Panc1 (cell line): ENCODE measurements at regions of chr11 and their contacts with region 1.

Region 1: GRCh38 chr11:69296890-69297786 is 3.2 kb downstream of the MYEOV start:
- DNase-seq: peak; percentile 96
- ATAC-seq: peak; percentile 48
- H3K4me3 ChIP-seq: peak overlapping the region; percentile 73 to 94
- H3K27ac ChIP-seq: peak overlapping the region; percentile 100
- H3K4me1 ChIP-seq: peaks cover 73% of the 10 kb centered on the region
- H3K27me3 ChIP-seq: no peaks in the 10 kb centered on the region
- CTCF ChIP-seq: no peak

Region 2: GRCh38 chr11:69101115-69101791 is 195.9 kb before region 1 on chr11:
- CTCF ChIA-PET with region 1: interaction called, 5 read pairs
- POLR2A ChIA-PET with region 1: interaction called, 3 read pairs
- in situ Hi-C with region 1: no loop called
- intact Hi-C with region 1: loop called (anchors 5 kb)
- DNase-seq: peak; percentile 67
- ATAC-seq: peak; percentile 85
- H3K4me3 ChIP-seq: no peak overlapping the region
- H3K27ac ChIP-seq: no peak overlapping the region
- H3K4me1 ChIP-seq: peaks cover 35% of the 10 kb centered on the region
- H3K27me3 ChIP-seq: no peaks in the 10 kb centered on the region
- CTCF ChIP-seq: peak; percentile 100

Region 3: DNA sequence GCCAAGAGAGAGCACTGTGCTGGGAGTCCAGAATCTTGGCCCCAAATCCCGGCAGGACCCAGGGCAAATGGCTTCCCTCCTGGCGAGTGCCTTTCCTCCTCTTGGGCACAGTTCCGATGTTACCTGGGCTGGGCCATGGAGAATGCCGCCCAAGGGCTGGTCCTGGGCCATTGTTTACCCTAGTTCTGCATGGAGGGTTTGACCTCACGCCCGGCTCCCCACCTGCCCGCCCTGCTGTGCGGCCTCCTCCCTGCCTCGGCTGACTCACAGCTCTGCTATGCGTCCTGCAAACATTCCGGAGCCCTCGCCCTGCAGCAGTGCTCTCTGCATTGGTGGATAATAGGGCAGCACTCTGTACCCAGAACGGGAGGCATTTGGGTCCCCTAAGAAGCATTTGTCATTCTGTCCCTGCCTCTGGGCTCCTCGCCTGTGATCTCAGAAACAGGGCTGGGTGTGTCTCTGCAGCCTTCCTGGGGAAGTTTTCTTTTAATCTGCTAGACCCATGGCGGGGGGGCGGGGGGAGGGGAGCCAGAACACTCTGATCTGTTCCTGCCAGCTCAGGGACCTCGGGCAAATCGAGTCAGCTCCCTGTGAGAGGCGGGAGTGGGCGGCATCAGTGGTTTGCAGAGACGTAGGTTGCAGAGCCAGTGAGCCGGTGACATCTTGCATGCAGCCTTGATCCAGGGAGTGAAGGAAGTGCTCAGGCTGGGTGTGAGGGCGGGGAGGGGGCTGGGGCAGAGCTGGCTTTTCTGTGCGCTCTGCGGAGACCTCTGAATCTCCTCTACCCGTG is 174.3 kb before region 1 on chr11:
- CTCF ChIA-PET with region 1: no interaction called
- POLR2A ChIA-PET with region 1: interaction called, 5 read pairs
- in situ Hi-C with region 1: no loop called
- intact Hi-C with region 1: loop called (anchors 5 kb)
- DNase-seq: peak; percentile 64
- ATAC-seq: peak; percentile 95
- H3K4me3 ChIP-seq: peak overlapping the region; percentile 9 to 44; a peak in 3 of 4 replicates
- H3K27ac ChIP-seq: peak overlapping the region; percentile 94
- H3K4me1 ChIP-seq: peaks cover 61% of the 10 kb centered on the region
- H3K27me3 ChIP-seq: no peaks in the 10 kb centered on the region
- CTCF ChIP-seq: no peak

Region 4: GRCh38 chr11:69240332-69241074 is 56.6 kb before region 1 on chr11:
- CTCF ChIA-PET with region 1: no interaction called
- POLR2A ChIA-PET with region 1: no interaction called
- in situ Hi-C with region 1: no loop called
- intact Hi-C with region 1: no loop called
- DNase-seq: no peak
- ATAC-seq: peak; percentile 69; the same call in 1 of the 2 replicates
- H3K4me3 ChIP-seq: no peak overlapping the region
- H3K27ac ChIP-seq: no peak overlapping the region
- H3K4me1 ChIP-seq: no peaks in the 10 kb centered on the region
- H3K27me3 ChIP-seq: 0 out of 2 replicates have a peak, but pooled peaks cover 3% of the 10 kb centered on the region
- CTCF ChIP-seq: no peak; the same call in 1 of the 2 replicates

Region 5: DNA sequence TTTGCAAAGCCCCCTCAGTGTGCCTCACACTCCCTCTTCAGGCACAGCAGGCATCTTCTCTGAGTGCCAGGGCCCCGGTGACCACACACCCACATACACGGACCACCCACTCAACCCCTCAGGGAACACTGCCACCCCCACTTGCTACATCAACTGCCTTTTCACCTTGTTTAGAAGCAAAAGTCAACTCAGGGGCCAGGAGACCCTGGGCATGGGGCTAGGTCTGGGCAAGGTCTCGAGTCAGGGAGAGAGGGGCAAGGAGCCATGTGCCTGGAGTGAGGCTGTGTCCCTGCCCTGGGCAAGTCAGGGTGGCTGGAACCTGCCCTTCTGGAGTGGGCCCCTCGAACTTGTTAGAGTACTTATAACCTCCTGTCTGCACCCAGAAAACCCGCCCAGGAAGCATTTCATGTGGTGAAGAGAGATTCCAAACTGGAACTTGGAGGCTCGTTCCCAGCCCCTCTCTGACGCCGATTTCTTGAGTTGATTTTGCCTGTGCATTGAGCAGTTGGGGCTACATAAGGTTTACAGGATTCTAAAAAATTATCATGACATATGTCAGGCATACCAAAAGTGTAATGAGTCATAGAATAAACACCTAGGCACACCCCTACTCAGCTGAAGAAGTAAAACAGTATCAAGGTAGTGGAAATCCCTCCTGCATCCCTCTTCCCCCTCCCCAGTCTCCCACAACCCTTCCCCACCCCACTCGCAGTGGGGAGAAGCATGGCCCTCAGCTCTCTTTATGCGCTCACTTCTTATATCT is 71.2 kb after region 1 on chr11:
- CTCF ChIA-PET with region 1: no interaction called
- POLR2A ChIA-PET with region 1: no interaction called
- in situ Hi-C with region 1: no loop called
- intact Hi-C with region 1: loop called (anchors 10 kb)
- DNase-seq: no peak
- ATAC-seq: no peak
- H3K4me3 ChIP-seq: no peak overlapping the region
- H3K27ac ChIP-seq: no peak overlapping the region
- H3K4me1 ChIP-seq: peaks cover 12% of the 10 kb centered on the region; the same call in 1 of the 2 replicates
- H3K27me3 ChIP-seq: no peaks in the 10 kb centered on the region
- CTCF ChIP-seq: no peak

Region 6: GRCh38 chr11:69497221-69497787 is 200.2 kb after region 1 on chr11:
- CTCF ChIA-PET with region 1: no interaction called
- POLR2A ChIA-PET with region 1: interaction called, 7 read pairs
- in situ Hi-C with region 1: no loop called
- intact Hi-C with region 1: loop called (anchors 10 kb)
- DNase-seq: peak; percentile 8
- ATAC-seq: peak; percentile 94
- H3K4me3 ChIP-seq: no peak overlapping the region
- H3K27ac ChIP-seq: peak overlapping the region; percentile 63; the same call in 1 of the 2 replicates
- H3K4me1 ChIP-seq: peaks cover 45% of the 10 kb centered on the region
- H3K27me3 ChIP-seq: no peaks in the 10 kb centered on the region
- CTCF ChIP-seq: no peak

Region 7: DNA sequence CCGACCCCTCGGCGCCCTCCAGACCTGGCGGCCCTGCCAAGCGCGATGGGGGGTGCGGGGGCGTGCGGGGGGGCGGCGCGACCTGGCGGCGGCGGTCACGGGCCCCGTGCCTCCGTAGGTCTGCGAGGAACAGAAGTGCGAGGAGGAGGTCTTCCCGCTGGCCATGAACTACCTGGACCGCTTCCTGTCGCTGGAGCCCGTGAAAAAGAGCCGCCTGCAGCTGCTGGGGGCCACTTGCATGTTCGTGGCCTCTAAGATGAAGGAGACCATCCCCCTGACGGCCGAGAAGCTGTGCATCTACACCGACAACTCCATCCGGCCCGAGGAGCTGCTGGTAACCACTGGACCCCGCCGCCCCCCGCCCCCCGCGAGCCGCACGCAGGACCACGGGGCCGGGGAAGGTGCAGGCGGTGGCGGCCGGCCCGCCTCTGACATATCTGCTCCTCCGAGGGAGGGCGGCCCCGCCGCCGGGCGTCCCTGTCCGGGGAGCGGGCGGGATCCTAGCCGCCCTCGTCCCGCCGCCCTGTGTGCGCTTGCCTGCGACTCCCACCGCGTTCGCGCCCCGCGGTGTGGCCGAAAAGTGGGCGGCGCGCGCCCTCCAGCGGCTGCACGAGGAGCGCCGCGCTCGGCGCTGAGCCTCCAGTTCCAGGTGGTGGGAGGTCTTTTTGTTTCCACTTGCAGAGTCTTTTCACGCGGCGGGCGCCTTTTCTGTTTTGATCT is 345.9 kb after region 1 on chr11:
- CTCF ChIA-PET with region 1: interaction called, 3 read pairs
- POLR2A ChIA-PET with region 1: interaction called, 5 read pairs
- in situ Hi-C with region 1: no loop called
- intact Hi-C with region 1: loop called (anchors 1 kb)
- DNase-seq: no peak
- ATAC-seq: peak; percentile 31
- H3K4me3 ChIP-seq: peak overlapping the region; percentile 80 to 93
- H3K27ac ChIP-seq: peak overlapping the region; percentile 73
- H3K4me1 ChIP-seq: peaks cover 37% of the 10 kb centered on the region
- H3K27me3 ChIP-seq: no peaks in the 10 kb centered on the region
- CTCF ChIP-seq: peak; percentile 98